Sciatic nerve (tissue), 2 donors: ENCODE measurements at regions of chr14 and their contacts with region 1.

Region 1: GRCh38 chr14:101537286-101537685 is 24.0 kb upstream of the DIO3 start:
- DNase-seq: no peak
- ATAC-seq: no peak

Region 2: GRCh38 chr14:101584055-101584859 is 47.0 kb after region 1 on chr14:
- intact Hi-C with region 1: loop called (anchors 1 kb)
- DNase-seq: no peak
- ATAC-seq: peak; percentile 89